ENCODE measurements at regions of chr10 and their contacts with region 1.

Region 1: GRCh38 chr10:117318909-117319308 is 56.3 kb downstream of the PDZD8 start:
- DNase-seq: peak; percentile 50
- H3K4me3 ChIP-seq: no peak overlapping the region
- H3K27ac ChIP-seq: no peak overlapping the region
- H3K4me1 ChIP-seq: no peaks in the 10 kb centered on the region
- H3K27me3 ChIP-seq: no peaks in the 10 kb centered on the region

Region 2: GRCh38 chr10:117226824-117227451 is 92.0 kb before region 1 on chr10:
- in situ Hi-C with region 1: loop called (anchors 10 kb)
- DNase-seq: peak; percentile 81
- H3K4me3 ChIP-seq: no peak overlapping the region
- H3K27ac ChIP-seq: no peak overlapping the region
- H3K4me1 ChIP-seq: no peaks in the 10 kb centered on the region
- H3K27me3 ChIP-seq: peaks cover 33% of the 10 kb centered on the region

Region 3: DNA sequence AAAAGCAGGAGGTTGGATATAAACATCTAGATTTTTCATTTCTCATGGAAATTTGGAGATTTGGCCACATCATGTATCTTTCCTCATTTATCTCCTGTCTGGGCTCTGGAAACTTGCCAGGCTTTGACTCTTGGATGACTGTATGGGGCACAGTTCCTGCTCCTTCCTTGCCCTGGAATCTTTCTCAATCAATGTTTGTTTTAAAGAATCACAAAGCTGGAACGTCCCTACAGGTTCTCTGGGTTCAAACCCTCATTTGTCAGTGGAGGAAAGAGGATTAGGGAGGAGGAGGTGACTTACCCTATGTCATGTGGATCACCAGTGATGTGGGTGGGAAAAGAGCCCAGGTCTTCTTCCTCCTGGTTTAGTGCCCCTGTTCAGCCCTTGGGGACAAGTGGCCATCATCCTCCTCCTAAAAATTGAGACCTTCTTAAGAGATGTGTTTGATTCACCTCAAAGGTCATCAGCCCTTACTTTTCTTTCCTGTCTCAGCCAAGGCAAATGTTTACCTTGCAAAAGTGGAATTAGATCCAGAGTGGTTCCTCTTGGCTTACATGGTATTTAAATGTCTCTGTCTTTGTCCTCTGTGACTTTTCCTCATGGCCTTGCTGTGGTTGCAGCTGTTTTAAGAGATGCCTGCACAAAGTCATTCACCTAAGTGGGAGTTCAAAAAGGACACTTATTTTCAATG is 95.2 kb after region 1 on chr10:
- in situ Hi-C with region 1: no loop called
- DNase-seq: peak; percentile 77
- H3K4me3 ChIP-seq: no peak overlapping the region
- H3K27ac ChIP-seq: no peak overlapping the region
- H3K4me1 ChIP-seq: peaks cover 12% of the 10 kb centered on the region
- H3K27me3 ChIP-seq: no peaks in the 10 kb centered on the region